A673 (cell line): ENCODE measurements at regions of chr20 and their contacts with region 1.

Region 1: DNA sequence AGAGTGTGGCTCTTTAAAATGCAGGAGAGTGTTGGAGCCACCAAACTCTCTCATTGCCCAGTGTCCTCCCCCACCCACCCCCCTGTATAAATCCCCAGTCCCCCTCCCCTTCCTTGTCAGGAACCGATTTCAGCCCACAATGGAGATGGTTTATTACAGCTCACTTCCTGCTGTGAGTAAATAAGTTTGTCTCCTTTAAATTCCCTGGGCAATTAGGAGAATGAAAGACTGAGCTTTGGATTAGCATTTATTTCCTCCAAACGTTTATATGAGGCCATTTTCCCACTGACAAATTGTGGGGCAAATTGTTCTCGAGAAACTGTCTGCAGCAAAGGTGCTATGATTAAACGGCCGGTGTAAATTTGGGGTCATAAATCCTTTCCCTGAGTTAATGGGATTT is 128.8 kb downstream of the DHX35 start:
- DNase-seq: peak; percentile 55
- H3K4me3 ChIP-seq: no peak overlapping the region
- H3K27ac ChIP-seq: no peak overlapping the region
- H3K4me1 ChIP-seq: peaks cover 9% of the 10 kb centered on the region
- H3K27me3 ChIP-seq: no peaks in the 10 kb centered on the region
- CTCF ChIP-seq: no peak

Region 2: GRCh38 chr20:38919683-38920082 is 171.2 kb before region 1 on chr20:
- CTCF ChIA-PET with region 1: no interaction called
- POLR2A ChIA-PET with region 1: no interaction called
- intact Hi-C with region 1: no loop called
- DNase-seq: no peak
- H3K4me3 ChIP-seq: no peak overlapping the region
- H3K27ac ChIP-seq: no peak overlapping the region
- H3K4me1 ChIP-seq: no peaks in the 10 kb centered on the region
- H3K27me3 ChIP-seq: peaks cover 30% of the 10 kb centered on the region
- CTCF ChIP-seq: no peak

Region 3: GRCh38 chr20:39421571-39422105 is 330.7 kb after region 1 on chr20:
- CTCF ChIA-PET with region 1: no interaction called
- POLR2A ChIA-PET with region 1: interaction called, 10 read pairs
- intact Hi-C with region 1: no loop called
- DNase-seq: no peak
- H3K4me3 ChIP-seq: no peak overlapping the region
- H3K27ac ChIP-seq: no peak overlapping the region
- H3K4me1 ChIP-seq: no peaks in the 10 kb centered on the region
- H3K27me3 ChIP-seq: peaks cover 8% of the 10 kb centered on the region
- CTCF ChIP-seq: no peak